CD8-positive, alpha-beta memory T cell (primary cell): ENCODE measurements at regions of chr7 and their contacts with region 1.

Region 1: DNA sequence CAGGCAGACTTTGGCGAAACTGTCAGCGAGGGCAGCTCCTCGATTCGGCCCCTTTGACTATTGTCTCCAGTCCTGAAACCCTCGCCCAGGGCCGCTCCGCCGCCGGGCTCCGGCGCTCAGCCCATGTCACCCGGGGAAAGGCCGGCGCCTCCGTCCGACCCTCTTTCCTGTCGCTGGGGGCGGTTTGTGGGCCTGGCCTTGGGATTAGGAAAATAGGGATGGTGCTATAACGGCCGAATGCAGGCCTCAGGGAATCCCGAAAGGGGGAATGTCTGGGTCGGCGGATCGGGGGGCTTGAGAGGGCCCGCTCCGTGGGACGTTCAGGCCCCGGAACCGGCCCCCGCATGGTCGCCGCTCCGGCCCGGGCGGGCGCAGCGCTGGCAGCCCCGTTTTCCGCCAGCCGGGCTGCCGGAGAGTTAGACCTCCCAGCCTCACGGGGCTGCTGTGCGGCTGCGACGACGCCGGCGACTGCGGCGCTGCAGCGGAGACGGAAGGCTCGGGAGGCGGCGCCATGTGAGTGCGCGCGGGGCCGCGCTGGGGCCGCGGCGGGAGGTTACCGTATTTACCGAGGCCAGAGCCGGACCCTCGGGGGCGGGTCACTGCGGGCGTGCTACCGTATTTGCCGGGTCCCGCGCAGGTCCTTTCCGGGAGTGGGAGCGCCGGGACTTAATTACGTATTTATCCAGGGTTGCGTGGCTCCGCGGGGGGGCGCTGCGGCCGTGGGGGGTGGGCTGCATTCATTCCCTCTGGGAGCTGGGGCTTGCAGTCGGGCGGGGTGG is 25.9 kb downstream of the ZNF775 start:
- DNase-seq: peak; percentile 63 to 84 (median 75)
- H3K4me3 ChIP-seq: peak overlapping the region; percentile 86
- H3K4me3 Mint-ChIP-seq: peak overlapping the region; percentile 83 to 99 (median 97)
- H3K27ac ChIP-seq: peak overlapping the region; percentile 93
- H3K27ac Mint-ChIP-seq: peak overlapping the region; percentile 89 to 100 (median 98)
- H3K4me1 ChIP-seq: peaks cover 32% of the 10 kb centered on the region
- H3K4me1 Mint-ChIP-seq: peaks cover 30 to 44% (median 42%) of the 10 kb centered on the region in 3 donors
- H3K27me3 ChIP-seq: no peaks in the 10 kb centered on the region
- H3K27me3 Mint-ChIP-seq: no peaks in the 10 kb centered on the region

Region 2: DNA sequence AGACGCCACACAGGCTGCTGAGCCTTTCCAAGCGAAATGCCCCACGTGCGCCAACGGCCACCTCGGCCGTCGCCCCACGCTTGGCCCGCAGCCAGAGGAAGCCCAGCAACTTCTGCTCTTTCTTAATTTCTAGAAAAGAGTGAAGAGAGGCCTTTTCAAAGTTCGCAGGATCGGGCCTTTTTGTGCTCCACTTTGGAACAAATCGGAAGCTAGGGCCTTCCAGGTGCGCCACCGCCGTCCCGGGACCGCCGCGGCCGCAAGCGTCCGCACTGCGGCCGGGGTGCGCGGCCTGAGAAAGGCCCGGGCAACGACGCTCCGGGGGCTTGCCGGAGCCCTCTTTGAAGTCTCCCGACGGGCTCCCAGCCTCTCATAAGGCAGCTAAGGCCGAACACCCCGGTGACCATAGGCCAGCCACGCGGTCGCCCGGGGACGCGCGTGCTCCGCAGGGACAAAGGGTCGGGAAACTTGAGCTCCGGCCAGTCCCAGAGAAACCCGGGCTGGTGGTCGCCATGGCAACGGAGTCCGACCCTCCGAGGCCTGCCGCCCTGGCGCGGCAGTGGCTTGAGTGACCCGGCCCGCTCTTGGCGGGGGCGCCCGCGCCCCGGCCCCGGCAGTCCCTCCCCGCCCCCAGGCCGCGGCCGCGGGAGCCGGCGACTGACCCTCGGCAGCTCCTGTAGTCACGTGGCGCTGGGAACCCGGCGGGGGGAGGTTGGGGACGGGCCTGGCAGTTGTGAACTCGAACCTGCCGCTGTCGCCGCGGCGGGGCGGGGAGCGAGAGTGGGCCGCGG is 36.7 kb before region 1 on chr7 and contains the start of gene REPIN1:
- CTCF ChIA-PET with region 1: interaction called, 7 read pairs
- POLR2A ChIA-PET with region 1: interaction called, 24 read pairs
- DNase-seq: peak; percentile 72 to 86 (median 77)
- H3K4me3 ChIP-seq: peak within 1 kb of the TSS; percentile 83
- H3K4me3 Mint-ChIP-seq: peak within 1 kb of the TSS; percentile 94 to 99 (median 95)
- H3K27ac ChIP-seq: peak within 1 kb of the TSS; percentile 94
- H3K27ac Mint-ChIP-seq: peak within 1 kb of the TSS; percentile 93 to 99 (median 94)
- H3K4me1 ChIP-seq: peaks cover 39% of the 10 kb centered on the region
- H3K4me1 Mint-ChIP-seq: peaks cover 27 to 42% (median 33%) of the 10 kb centered on the region in 3 donors
- H3K27me3 ChIP-seq: no peaks in the 10 kb centered on the region
- H3K27me3 Mint-ChIP-seq: peaks cover 0 to 2% of the 10 kb centered on the region in 2 donors
- total RNA-seq, gene REPIN1: 57.0 to 58.2 TPM

Region 3: GRCh38 chr7:150716368-150716767 is 311.4 kb after region 1 on chr7 and contains the start of gene GIMAP1:
- CTCF ChIA-PET with region 1: no interaction called
- POLR2A ChIA-PET with region 1: no interaction called
- DNase-seq: peak; percentile 24 to 81 (median 71)
- H3K4me3 ChIP-seq: peak within 1 kb of the TSS; percentile 77
- H3K4me3 Mint-ChIP-seq: peak within 1 kb of the TSS; percentile 94 to 100 (median 100)
- H3K27ac ChIP-seq: peak within 1 kb of the TSS; percentile 79
- H3K27ac Mint-ChIP-seq: peak within 1 kb of the TSS; percentile 84 to 99 (median 98)
- H3K4me1 ChIP-seq: peaks cover 51% of the 10 kb centered on the region
- H3K4me1 Mint-ChIP-seq: peaks cover 60 to 80% (median 75%) of the 10 kb centered on the region in 3 donors
- H3K27me3 ChIP-seq: no peaks in the 10 kb centered on the region
- H3K27me3 Mint-ChIP-seq: no peaks in the 10 kb centered on the region
- total RNA-seq, gene GIMAP1: 9.8 to 10.0 TPM

Region 4: DNA sequence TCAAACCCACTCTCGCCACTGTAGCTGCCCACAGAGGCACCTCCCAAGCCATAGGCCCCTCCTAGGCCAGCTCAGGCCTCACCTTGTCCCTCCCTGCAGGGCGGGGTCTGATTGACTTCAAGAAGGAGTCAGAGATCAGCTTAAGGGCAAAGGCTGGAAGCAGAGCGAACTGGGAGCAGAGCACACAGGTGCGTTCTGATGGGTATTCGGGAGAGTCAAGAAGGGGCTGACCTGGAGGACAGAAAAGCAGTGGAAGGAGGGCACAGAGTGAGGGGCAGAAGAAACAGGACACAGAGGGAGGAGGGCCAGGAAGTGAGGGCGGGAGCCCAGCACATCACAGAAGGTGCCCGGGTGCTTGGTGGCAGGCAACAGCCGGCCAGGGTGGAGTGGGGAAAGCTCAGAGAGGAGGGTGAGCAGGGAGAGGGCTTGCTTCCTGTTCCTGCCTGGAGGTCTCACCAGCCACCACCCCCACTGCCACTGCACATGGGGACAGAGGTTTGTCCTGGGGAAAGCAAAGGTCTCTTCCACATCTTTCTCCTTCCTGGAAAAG is 447.5 kb after region 1 on chr7 and contains the start of gene AOC1:
- CTCF ChIA-PET with region 1: no interaction called
- POLR2A ChIA-PET with region 1: no interaction called
- DNase-seq: no peak
- H3K4me3 ChIP-seq: no peak within 1 kb of the TSS
- H3K4me3 Mint-ChIP-seq: no peak within 1 kb of the TSS
- H3K27ac ChIP-seq: no peak within 1 kb of the TSS
- H3K27ac Mint-ChIP-seq: peak within 1 kb of the TSS in 1 of 8 donors; percentile 65
- H3K4me1 ChIP-seq: no peaks in the 10 kb centered on the region
- H3K4me1 Mint-ChIP-seq: no peaks in the 10 kb centered on the region
- H3K27me3 ChIP-seq: peaks cover 8% of the 10 kb centered on the region
- H3K27me3 Mint-ChIP-seq: peaks cover 18 to 54% of the 10 kb centered on the region in 2 donors
- total RNA-seq, gene AOC1: not detected